ENCODE measurements at regions of chr17 and their contacts with region 1.

Region 1: GRCh38 chr17:4412933-4413831 is 20.6 kb upstream of the SPNS3 start:
- DNase-seq: peak; percentile 89
- H3K4me3 Mint-ChIP-seq: no peak overlapping the region
- H3K27ac Mint-ChIP-seq: no peak overlapping the region
- H3K4me1 Mint-ChIP-seq: no peaks in the 10 kb centered on the region
- H3K27me3 Mint-ChIP-seq: no peaks in the 10 kb centered on the region
- CTCF ChIP-seq: peak; percentile 78

Region 2: DNA sequence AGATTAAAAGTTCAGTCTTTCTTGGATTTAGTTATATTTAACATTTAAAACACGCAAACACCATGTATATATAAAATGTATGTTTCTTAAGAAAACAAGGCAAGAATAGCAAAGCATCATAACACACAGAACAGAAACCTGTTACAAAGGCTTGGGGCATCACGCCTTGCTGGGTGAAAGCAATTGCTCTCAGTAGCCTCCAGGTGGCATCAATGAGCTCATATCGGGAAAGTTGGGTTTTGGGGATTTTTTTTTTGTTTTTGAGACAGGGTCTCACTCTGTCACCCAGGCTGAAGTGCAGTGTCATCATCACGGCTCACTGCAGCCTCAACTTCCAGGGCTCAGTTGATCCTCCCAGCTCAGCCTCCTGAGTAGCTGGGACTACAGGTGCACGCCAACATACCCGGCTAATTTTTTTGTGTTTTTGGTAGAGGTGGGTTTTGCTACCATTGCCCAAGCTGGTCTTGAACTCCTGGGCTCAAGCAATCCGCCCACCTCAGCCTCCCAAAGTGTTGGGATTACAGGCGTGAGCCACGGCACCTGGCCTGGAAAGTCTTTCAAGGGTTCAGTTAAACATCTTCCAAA is 213.3 kb before region 1 on chr17:
- CTCF ChIA-PET with region 1: interaction called, 6 read pairs
- intact Hi-C with region 1: loop called (anchors 5 kb)
- DNase-seq: peak; percentile 23
- H3K4me3 Mint-ChIP-seq: no peak overlapping the region
- H3K27ac Mint-ChIP-seq: no peak overlapping the region
- H3K4me1 Mint-ChIP-seq: no peaks in the 10 kb centered on the region
- H3K27me3 Mint-ChIP-seq: no peaks in the 10 kb centered on the region
- CTCF ChIP-seq: peak; percentile 21

Region 3: GRCh38 chr17:4215882-4216570 is 197.2 kb before region 1 on chr17:
- CTCF ChIA-PET with region 1: interaction called, 9 read pairs
- intact Hi-C with region 1: loop called (anchors 1 kb)
- DNase-seq: no peak
- H3K4me3 Mint-ChIP-seq: no peak overlapping the region
- H3K27ac Mint-ChIP-seq: no peak overlapping the region
- H3K4me1 Mint-ChIP-seq: no peaks in the 10 kb centered on the region
- H3K27me3 Mint-ChIP-seq: no peaks in the 10 kb centered on the region
- CTCF ChIP-seq: no peak

Region 4: DNA sequence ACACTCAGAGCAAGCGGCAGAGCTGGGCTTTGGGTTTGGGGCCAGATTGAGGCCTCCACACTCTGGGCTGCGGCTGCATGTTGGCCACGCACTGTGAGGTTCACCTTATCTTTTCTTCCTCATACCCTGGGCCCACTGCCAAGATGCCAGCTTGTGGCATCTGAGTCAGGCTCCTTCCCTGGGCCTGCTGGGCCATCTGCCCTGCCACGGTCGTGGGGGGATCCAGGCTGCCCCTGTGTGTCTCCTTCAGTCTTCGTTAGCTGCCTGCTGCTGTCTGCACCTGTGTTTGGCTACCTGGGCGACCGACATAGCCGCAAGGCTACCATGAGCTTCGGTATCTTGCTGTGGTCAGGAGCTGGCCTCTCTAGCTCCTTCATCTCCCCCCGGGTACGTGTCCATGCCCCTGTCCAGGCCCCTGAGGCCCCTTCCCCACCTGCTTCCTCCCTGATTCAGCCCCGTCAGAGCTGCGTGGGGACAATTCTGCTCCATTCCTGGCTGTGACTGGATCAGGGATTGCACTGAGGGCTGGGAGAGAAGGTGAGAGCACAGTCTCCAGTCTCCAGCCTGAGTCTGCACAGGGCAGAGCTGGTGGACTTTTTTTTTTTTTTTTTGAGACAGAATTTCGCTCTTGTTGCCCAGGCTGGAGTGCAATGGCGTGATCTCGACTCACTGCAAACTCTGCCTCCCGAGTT is 31.7 kb after region 1 on chr17:
- CTCF ChIA-PET with region 1: no interaction called
- intact Hi-C with region 1: no loop called
- DNase-seq: peak; percentile 85
- H3K4me3 Mint-ChIP-seq: no peak overlapping the region
- H3K27ac Mint-ChIP-seq: no peak overlapping the region
- H3K4me1 Mint-ChIP-seq: peaks cover 32% of the 10 kb centered on the region
- H3K27me3 Mint-ChIP-seq: no peaks in the 10 kb centered on the region
- CTCF ChIP-seq: no peak

Measured in Calu3 (cell line).